MCF 10A (cell line): ENCODE measurements at regions of chr1 and their contacts with region 1.

Region 1: DNA sequence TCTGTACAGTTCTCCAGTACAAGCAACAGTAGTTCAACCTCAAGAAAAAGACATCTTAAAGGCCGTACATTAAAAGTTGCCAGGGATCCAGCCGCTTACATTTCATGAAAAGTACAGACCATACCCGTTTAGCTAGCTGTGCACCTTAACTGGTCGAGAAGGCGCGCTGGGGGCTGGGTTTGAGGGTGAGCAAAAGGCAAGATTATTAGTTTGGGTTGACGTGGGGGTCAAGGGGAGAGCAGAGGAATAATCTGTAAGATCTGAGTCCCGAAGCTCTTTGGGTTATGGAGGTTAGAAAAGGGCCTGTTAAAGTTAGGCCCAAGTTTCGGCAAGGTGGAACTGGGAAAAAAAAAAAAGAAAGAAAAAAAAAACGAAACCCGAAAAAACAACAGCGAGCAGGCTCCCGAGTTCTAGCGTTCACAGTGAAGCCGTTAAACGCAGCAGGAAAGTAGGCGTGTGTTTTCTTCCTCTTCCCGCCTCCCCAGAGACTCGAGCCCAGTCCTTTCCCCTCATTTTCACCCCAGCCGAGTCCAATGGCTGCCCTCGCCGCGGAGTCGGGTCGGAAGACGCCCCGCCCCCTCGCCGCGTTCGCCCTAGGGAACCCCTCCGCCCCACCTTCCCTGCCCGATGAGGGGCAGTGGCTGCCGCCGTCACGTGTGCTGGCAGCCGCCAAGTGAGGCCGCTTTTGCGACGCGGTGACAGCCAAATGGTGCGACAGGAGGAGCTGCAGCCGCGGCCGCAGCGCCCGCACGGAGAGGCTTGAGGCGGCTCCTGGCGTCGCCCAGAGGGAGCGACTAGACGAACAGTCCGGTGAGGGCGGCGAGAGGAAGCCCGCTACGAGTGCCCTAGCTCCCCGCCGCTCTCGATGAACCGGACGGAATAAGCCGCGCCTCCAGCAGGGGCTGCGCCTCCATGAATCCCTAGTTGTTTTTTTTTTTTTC is at the start of gene PKN2:
- DNase-seq: peak; percentile 99
- H3K4me3 Mint-ChIP-seq: peak within 1 kb of the TSS; percentile 96
- H3K27ac Mint-ChIP-seq: peak within 1 kb of the TSS; percentile 87
- H3K4me1 Mint-ChIP-seq: peaks cover 6% of the 10 kb centered on the region
- H3K27me3 Mint-ChIP-seq: no peaks in the 10 kb centered on the region
- CTCF ChIP-seq: no peak
- total RNA-seq, gene PKN2: 35.4 and 40.2 TPM in 2 replicates

Region 2: GRCh38 chr1:88009916-88010315 is 673.9 kb before region 1 on chr1:
- CTCF ChIA-PET with region 1: no interaction called
- POLR2A ChIA-PET with region 1: no interaction called
- intact Hi-C with region 1: no loop called
- DNase-seq: no peak
- H3K4me3 Mint-ChIP-seq: no peak overlapping the region
- H3K27ac Mint-ChIP-seq: no peak overlapping the region
- H3K4me1 Mint-ChIP-seq: no peaks in the 10 kb centered on the region
- H3K27me3 Mint-ChIP-seq: no peaks in the 10 kb centered on the region
- CTCF ChIP-seq: no peak

Region 3: GRCh38 chr1:88451856-88452255 is 232.0 kb before region 1 on chr1:
- CTCF ChIA-PET with region 1: no interaction called
- POLR2A ChIA-PET with region 1: no interaction called
- intact Hi-C with region 1: no loop called
- DNase-seq: no peak
- H3K4me3 Mint-ChIP-seq: no peak overlapping the region
- H3K27ac Mint-ChIP-seq: no peak overlapping the region
- H3K4me1 Mint-ChIP-seq: no peaks in the 10 kb centered on the region
- H3K27me3 Mint-ChIP-seq: peaks cover 38% of the 10 kb centered on the region
- CTCF ChIP-seq: no peak

Region 4: GRCh38 chr1:88655685-88656299 is 28.0 kb before region 1 on chr1:
- CTCF ChIA-PET with region 1: interaction called, 38 read pairs
- POLR2A ChIA-PET with region 1: interaction called, 10 read pairs
- intact Hi-C with region 1: no loop called
- DNase-seq: peak; percentile 31
- H3K4me3 Mint-ChIP-seq: no peak overlapping the region
- H3K27ac Mint-ChIP-seq: peak overlapping the region; percentile 36
- H3K4me1 Mint-ChIP-seq: no peaks in the 10 kb centered on the region
- H3K27me3 Mint-ChIP-seq: no peaks in the 10 kb centered on the region
- CTCF ChIP-seq: peak; percentile 37

Region 5: GRCh38 chr1:88698140-88698539 is 14.3 kb after region 1 on chr1:
- CTCF ChIA-PET with region 1: interaction called, 4 read pairs
- POLR2A ChIA-PET with region 1: interaction called, 53 read pairs
- intact Hi-C with region 1: no loop called
- DNase-seq: no peak
- H3K4me3 Mint-ChIP-seq: no peak overlapping the region
- H3K27ac Mint-ChIP-seq: peak overlapping the region; percentile 1
- H3K4me1 Mint-ChIP-seq: peaks cover 28% of the 10 kb centered on the region
- H3K27me3 Mint-ChIP-seq: no peaks in the 10 kb centered on the region
- CTCF ChIP-seq: no peak

Region 6: DNA sequence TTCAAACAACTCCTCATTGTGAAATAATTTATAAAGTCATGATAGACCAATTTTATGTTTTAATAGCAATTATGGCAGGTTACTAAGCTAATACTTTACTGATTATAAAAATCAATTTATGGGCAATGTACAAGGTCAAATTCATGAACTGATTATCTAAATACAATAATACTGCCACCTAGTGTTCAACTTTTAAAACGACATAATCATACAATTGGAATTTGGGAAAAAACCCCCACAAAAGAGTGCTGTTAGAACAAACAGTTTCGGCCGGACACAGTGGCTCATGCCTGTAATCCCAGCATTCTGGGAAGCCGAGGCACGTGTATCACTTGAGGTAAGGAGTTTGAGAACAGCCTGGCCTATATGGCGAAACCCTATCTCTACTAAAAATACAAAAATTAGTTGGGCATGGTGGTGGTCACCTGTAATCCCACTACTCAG is 193.6 kb after region 1 on chr1:
- CTCF ChIA-PET with region 1: interaction called, 13 read pairs
- POLR2A ChIA-PET with region 1: interaction called, 3 read pairs
- intact Hi-C with region 1: no loop called
- DNase-seq: peak; percentile 36
- H3K4me3 Mint-ChIP-seq: no peak overlapping the region
- H3K27ac Mint-ChIP-seq: no peak overlapping the region
- H3K4me1 Mint-ChIP-seq: peaks cover 15% of the 10 kb centered on the region
- H3K27me3 Mint-ChIP-seq: no peaks in the 10 kb centered on the region
- CTCF ChIP-seq: peak; percentile 40